A549 (cell line): ENCODE measurements at regions of chr14 and their contacts with region 1.

Region 1: GRCh38 chr14:103141119-103141796 is 18.0 kb downstream of the TNFAIP2 start:
- DNase-seq: peak; percentile 71 to 78
- ATAC-seq: peak in 1 of 2 experiments; percentile 13; a peak in 3 of 6 replicates
- H3K4me3 ChIP-seq: no peak overlapping the region
- H3K27ac ChIP-seq: peak overlapping the region; percentile 16 to 81; a peak in 5 of 6 replicates
- H3K4me1 ChIP-seq: peaks cover 62% of the 10 kb centered on the region
- CTCF ChIP-seq: peak; percentile 71
- EP300 ChIP-seq: no peak
- POLR2A ChIP-seq: no peak
- RAD21 ChIP-seq: peak; percentile 63 to 68

Region 2: GRCh38 chr14:103121846-103122584 is 19.2 kb before region 1 on chr14:
- CTCF ChIA-PET with region 1: interaction called, 95 read pairs
- POLR2A ChIA-PET with region 1: interaction called, 3 read pairs
- DNase-seq: peak; percentile 83 to 98
- ATAC-seq: peak; percentile 66 to 68
- H3K4me3 ChIP-seq: peak overlapping the region; percentile 83
- H3K27ac ChIP-seq: peak overlapping the region; percentile 96 to 98
- H3K4me1 ChIP-seq: peaks cover 71% of the 10 kb centered on the region
- CTCF ChIP-seq: no peak
- EP300 ChIP-seq: peak; percentile 40 to 78; a peak in 2 of 5 replicates
- POLR2A ChIP-seq: peak; percentile 26
- RAD21 ChIP-seq: peak in 1 of 2 experiments; percentile 48; a peak in 1 of 5 replicates

Region 3: DNA sequence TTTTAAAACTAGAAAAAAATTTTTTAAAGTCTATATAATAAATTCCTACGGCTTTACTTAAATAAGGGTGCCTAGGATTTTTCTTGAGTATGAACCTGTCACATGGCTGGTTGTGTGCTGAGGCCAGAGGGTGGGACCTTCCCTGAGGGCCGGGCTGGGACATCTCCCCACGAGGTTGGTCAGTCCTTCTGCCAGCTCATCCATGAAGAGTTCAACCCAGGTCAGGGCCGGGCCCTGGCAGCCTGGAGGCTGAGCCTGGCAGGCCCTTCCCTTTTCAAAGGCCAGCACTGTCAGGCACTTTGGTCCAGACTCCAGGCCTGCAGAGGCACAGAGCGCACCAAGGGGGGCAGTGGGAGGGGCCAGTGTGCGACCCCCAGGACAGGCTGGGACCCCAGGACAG is 13.8 kb after region 1 on chr14:
- CTCF ChIA-PET with region 1: interaction called, 10 read pairs
- POLR2A ChIA-PET with region 1: no interaction called
- DNase-seq: peak; percentile 88 to 89
- ATAC-seq: peak; percentile 96 to 98
- H3K4me3 ChIP-seq: no peak overlapping the region
- H3K27ac ChIP-seq: peak overlapping the region; percentile 79 to 93
- H3K4me1 ChIP-seq: peaks cover 25% of the 10 kb centered on the region
- CTCF ChIP-seq: no peak
- EP300 ChIP-seq: no peak
- POLR2A ChIP-seq: no peak
- RAD21 ChIP-seq: no peak

Region 4: DNA sequence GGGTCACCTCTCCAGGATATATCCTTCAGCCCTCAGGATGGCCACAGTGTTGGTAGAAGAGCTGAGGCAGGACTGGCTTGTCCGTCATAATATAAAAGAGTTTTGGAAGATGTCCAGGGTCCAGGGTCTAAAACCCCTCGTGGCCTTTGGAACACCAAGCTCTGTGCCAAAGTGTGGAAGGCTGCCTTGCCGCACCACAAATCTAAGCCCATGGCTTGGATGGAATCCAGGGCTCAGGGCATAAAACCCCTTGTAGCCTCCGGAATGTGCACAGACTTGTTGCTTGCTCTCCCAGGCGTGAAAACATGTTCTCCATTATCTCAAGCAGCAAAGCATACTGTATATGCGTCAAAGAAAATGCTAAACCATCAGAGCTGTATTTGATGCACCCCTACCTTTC is 28.7 kb after region 1 on chr14:
- CTCF ChIA-PET with region 1: interaction called, 16 read pairs
- POLR2A ChIA-PET with region 1: no interaction called
- DNase-seq: no peak
- ATAC-seq: no peak
- H3K4me3 ChIP-seq: no peak overlapping the region
- H3K27ac ChIP-seq: no peak overlapping the region
- H3K4me1 ChIP-seq: no peaks in the 10 kb centered on the region
- CTCF ChIP-seq: no peak
- EP300 ChIP-seq: no peak
- POLR2A ChIP-seq: no peak
- RAD21 ChIP-seq: no peak